ENCODE measurements at regions of chr14 and their contacts with region 1.

Region 1: GRCh38 chr14:68248481-68249255 is 429.1 kb downstream of the RAD51B start:
- DNase-seq: peak; percentile 34
- ATAC-seq: peak; percentile 77
- H3K4me3 Mint-ChIP-seq: peak overlapping the region; percentile 19
- H3K27ac Mint-ChIP-seq: peak overlapping the region; percentile 90
- H3K4me1 Mint-ChIP-seq: peaks cover 72% of the 10 kb centered on the region
- H3K27me3 Mint-ChIP-seq: no peaks in the 10 kb centered on the region
- CTCF ChIP-seq: no peak

Region 2: GRCh38 chr14:67269298-67270061 is 979.2 kb before region 1 on chr14:
- CTCF ChIA-PET with region 1: no interaction called
- POLR2A ChIA-PET with region 1: no interaction called
- intact Hi-C with region 1: no loop called
- DNase-seq: no peak
- ATAC-seq: no peak
- H3K4me3 Mint-ChIP-seq: no peak overlapping the region
- H3K27ac Mint-ChIP-seq: no peak overlapping the region
- H3K4me1 Mint-ChIP-seq: peaks cover 3% of the 10 kb centered on the region
- H3K27me3 Mint-ChIP-seq: no peaks in the 10 kb centered on the region
- CTCF ChIP-seq: no peak

Region 3: GRCh38 chr14:68261092-68261842 is 12.6 kb after region 1 on chr14:
- CTCF ChIA-PET with region 1: interaction called, 28 read pairs
- POLR2A ChIA-PET with region 1: interaction called, 107 read pairs
- intact Hi-C with region 1: loop called (anchors 1 kb)
- DNase-seq: no peak
- ATAC-seq: peak; percentile 56
- H3K4me3 Mint-ChIP-seq: peak overlapping the region; percentile 51
- H3K27ac Mint-ChIP-seq: peak overlapping the region; percentile 96
- H3K4me1 Mint-ChIP-seq: peaks cover 81% of the 10 kb centered on the region
- H3K27me3 Mint-ChIP-seq: no peaks in the 10 kb centered on the region
- CTCF ChIP-seq: no peak

Region 4: GRCh38 chr14:68307014-68307789 is 58.5 kb after region 1 on chr14:
- CTCF ChIA-PET with region 1: interaction called, 6 read pairs
- POLR2A ChIA-PET with region 1: interaction called, 29 read pairs
- intact Hi-C with region 1: no loop called
- DNase-seq: no peak
- ATAC-seq: no peak
- H3K4me3 Mint-ChIP-seq: no peak overlapping the region
- H3K27ac Mint-ChIP-seq: peak overlapping the region; percentile 84
- H3K4me1 Mint-ChIP-seq: peaks cover 72% of the 10 kb centered on the region
- H3K27me3 Mint-ChIP-seq: no peaks in the 10 kb centered on the region
- CTCF ChIP-seq: no peak

Region 5: GRCh38 chr14:68401855-68402254 is 153.2 kb after region 1 on chr14:
- CTCF ChIA-PET with region 1: interaction called, 10 read pairs
- POLR2A ChIA-PET with region 1: interaction called, 83 read pairs
- intact Hi-C with region 1: loop called (anchors 1 kb)
- DNase-seq: no peak
- ATAC-seq: peak; percentile 59
- H3K4me3 Mint-ChIP-seq: peak overlapping the region; percentile 72
- H3K27ac Mint-ChIP-seq: peak overlapping the region; percentile 92
- H3K4me1 Mint-ChIP-seq: peaks cover 92% of the 10 kb centered on the region
- H3K27me3 Mint-ChIP-seq: no peaks in the 10 kb centered on the region
- CTCF ChIP-seq: no peak

Region 6: DNA sequence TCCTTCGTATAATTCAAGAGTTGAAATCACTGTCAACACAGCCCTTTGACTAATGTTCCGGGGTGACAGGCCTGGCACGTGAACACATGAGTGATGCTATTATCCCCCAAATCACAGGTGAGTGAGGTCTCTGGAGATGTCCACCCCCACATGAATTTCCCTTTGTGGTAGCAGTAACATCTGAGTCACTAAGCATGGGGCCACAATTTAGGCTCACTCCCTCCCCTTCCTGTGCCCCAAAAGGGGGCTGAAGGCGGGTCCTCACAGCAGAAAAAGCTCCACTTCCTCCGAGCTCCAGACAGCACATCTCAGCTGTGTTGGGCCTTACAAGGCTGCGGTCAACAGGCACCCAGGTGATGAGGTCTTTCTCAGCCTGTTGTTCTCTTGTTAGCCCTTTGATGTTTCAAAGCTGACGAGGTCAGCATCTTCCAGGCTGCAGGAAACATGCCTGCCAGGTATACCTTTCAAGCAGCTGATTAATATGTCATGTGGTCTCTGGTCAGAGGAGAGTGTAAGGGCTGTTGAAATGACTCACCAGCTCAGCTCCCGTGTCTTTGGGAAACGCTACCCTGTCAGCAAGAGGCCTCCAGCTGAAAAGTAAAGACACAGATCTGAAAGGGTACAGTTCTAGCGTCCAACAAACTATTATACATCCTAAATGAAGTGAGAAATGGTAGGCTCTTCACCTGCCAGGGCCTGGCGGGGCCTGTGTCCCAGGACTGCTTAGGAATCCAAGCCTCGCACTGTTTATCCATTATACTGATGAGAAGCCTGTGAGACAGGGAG is 436.9 kb after region 1 on chr14:
- CTCF ChIA-PET with region 1: interaction called, 6 read pairs
- POLR2A ChIA-PET with region 1: interaction called, 40 read pairs
- intact Hi-C with region 1: loop called (anchors 1 kb)
- DNase-seq: peak; percentile 65
- ATAC-seq: peak; percentile 76
- H3K4me3 Mint-ChIP-seq: peak overlapping the region; percentile 73
- H3K27ac Mint-ChIP-seq: peak overlapping the region; percentile 97
- H3K4me1 Mint-ChIP-seq: peaks cover 87% of the 10 kb centered on the region
- H3K27me3 Mint-ChIP-seq: no peaks in the 10 kb centered on the region
- CTCF ChIP-seq: no peak

Region 7: GRCh38 chr14:68807148-68807600 is 558.5 kb after region 1 on chr14:
- CTCF ChIA-PET with region 1: interaction called, 135 read pairs
- POLR2A ChIA-PET with region 1: interaction called, 15 read pairs
- intact Hi-C with region 1: no loop called
- DNase-seq: no peak
- ATAC-seq: no peak
- H3K4me3 Mint-ChIP-seq: peak overlapping the region; percentile 71
- H3K27ac Mint-ChIP-seq: peak overlapping the region; percentile 98
- H3K4me1 Mint-ChIP-seq: peaks cover 80% of the 10 kb centered on the region
- H3K27me3 Mint-ChIP-seq: no peaks in the 10 kb centered on the region
- CTCF ChIP-seq: no peak

Measured in activated B cell treated with CpG ODN at 0.5 μM for 24 hours (primary cell).